ENCODE measurements at regions of chr19 and their contacts with region 1.

Region 1: GRCh38 chr19:16628183-16628983 is at the start of gene MED26:
- DNase-seq: peak; percentile 89 to 97 (median 94)
- ATAC-seq: peak; percentile 91 to 93
- H3K4me3 Mint-ChIP-seq: peak within 1 kb of the TSS; percentile 95 to 99 (median 96)
- H3K27ac Mint-ChIP-seq: peak within 1 kb of the TSS; percentile 92 to 99 (median 98)
- H3K4me1 Mint-ChIP-seq: peaks cover 22 to 52% (median 47%) of the 10 kb centered on the region in 4 donors
- H3K27me3 Mint-ChIP-seq: no peaks in the 10 kb centered on the region
- polyA plus RNA-seq, gene MED26: 2.7 to 3.9 (median 3.1) TPM

Region 2: DNA sequence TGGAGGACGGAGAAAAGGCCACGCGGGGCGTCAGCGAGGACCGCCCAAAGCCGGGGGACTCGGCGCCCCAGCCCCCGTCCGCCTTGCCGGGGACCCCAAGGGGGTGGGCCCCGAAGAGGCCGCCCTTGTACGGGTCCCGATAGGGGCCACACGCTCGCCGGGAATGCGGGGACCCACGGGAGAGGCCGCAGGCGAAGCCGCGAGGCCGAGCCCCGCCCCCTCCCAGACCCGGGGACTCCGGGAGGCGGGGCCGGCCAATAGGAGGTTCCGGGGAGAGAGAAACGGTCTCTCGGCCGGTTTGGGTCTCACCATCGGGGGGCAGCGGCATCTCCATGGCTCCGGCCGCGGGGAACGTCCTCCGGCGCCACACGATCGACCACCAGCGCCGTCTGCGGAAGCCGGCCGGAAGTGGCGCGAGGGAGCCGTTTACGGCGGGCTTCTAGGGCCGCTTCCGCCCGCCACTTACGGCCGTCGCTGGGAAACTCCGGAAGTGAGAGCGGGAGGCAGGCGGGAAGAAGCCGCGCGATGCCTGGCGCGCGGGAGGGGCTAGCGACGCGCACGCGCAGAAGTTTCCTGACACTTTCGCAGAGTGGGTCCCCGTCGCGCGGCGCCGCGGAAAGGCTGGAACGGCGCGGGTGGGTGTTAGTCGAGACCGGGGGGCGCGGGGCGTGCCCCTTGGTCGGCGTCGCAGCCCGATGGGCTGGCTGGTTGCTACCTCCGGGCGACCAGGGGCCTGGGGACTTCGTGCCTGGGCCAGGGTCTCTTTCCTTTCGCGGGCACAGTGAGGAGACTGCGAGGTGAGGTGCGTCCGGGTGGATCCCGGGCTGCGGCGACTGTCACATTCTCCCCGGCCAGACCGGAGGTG is 86.1 kb before region 1 on chr19 and contains the start of gene CHERP:
- POLR2A ChIA-PET with region 1: interaction called, 22 read pairs
- DNase-seq: peak; percentile 91 to 97 (median 94)
- ATAC-seq: peak; percentile 84 to 90
- H3K4me3 Mint-ChIP-seq: peak within 1 kb of the TSS; percentile 83 to 97 (median 90)
- H3K27ac Mint-ChIP-seq: peak within 1 kb of the TSS; percentile 81 to 97 (median 90)
- H3K4me1 Mint-ChIP-seq: peaks cover 33 to 71% (median 62%) of the 10 kb centered on the region in 4 donors
- H3K27me3 Mint-ChIP-seq: no peaks in the 10 kb centered on the region
- polyA plus RNA-seq, gene CHERP: 4.7 to 17.8 (median 8.6) TPM

Region 3: GRCh38 chr19:16572332-16573211 is 55.8 kb before region 1 on chr19 and contains the start of gene SLC35E1:
- POLR2A ChIA-PET with region 1: interaction called, 18 read pairs
- DNase-seq: peak; percentile 83 to 95 (median 88)
- ATAC-seq: peak; percentile 89 to 92
- H3K4me3 Mint-ChIP-seq: peak within 1 kb of the TSS; percentile 93 to 99 (median 98)
- H3K27ac Mint-ChIP-seq: peak within 1 kb of the TSS; percentile 97 to 99 (median 99)
- H3K4me1 Mint-ChIP-seq: peaks cover 12 to 69% (median 52%) of the 10 kb centered on the region in 4 donors
- H3K27me3 Mint-ChIP-seq: no peaks in the 10 kb centered on the region
- polyA plus RNA-seq, gene SLC35E1: 13.6 to 22.3 (median 16.1) TPM

Region 4: GRCh38 chr19:16615808-16616207 is 12.6 kb before region 1 on chr19:
- POLR2A ChIA-PET with region 1: no interaction called
- DNase-seq: no peak
- ATAC-seq: peak in 1 of 2 donors; percentile 23
- H3K4me3 Mint-ChIP-seq: no peak overlapping the region
- H3K27ac Mint-ChIP-seq: peak overlapping the region in 5 of 10 donors; percentile 1 to 78 (median 64)
- H3K4me1 Mint-ChIP-seq: peaks cover 43 to 95% (median 86%) of the 10 kb centered on the region in 4 donors
- H3K27me3 Mint-ChIP-seq: no peaks in the 10 kb centered on the region

Measured in naive thymus-derived CD8-positive, alpha-beta T cell (primary cell).